MCF 10A (cell line): ENCODE measurements at regions of chr17 and their contacts with region 1.

Region 1: DNA sequence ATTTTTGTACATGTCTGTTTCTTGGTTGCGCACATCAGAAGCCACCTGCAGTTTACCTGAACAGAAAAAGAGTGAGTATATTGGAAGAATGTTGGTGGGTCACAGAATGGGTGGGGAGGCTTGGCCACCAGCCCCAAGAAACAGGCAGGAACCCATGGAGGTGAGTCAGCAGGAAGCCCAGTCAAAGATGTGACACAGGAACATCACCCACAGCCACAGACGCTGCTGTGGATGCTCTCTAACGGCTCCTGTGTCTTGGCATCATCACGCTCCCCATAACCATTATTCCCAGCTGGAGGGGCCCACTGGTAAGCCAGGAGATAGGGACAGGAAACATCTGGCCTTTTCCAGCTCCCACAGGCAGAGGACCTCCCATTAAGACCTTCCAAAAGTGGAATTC is 94.0 kb upstream of the WSB1 start:
- DNase-seq: no peak
- H3K4me3 Mint-ChIP-seq: no peak overlapping the region
- H3K27ac Mint-ChIP-seq: no peak overlapping the region
- H3K4me1 Mint-ChIP-seq: no peaks in the 10 kb centered on the region
- H3K27me3 Mint-ChIP-seq: no peaks in the 10 kb centered on the region
- CTCF ChIP-seq: no peak

Region 2: DNA sequence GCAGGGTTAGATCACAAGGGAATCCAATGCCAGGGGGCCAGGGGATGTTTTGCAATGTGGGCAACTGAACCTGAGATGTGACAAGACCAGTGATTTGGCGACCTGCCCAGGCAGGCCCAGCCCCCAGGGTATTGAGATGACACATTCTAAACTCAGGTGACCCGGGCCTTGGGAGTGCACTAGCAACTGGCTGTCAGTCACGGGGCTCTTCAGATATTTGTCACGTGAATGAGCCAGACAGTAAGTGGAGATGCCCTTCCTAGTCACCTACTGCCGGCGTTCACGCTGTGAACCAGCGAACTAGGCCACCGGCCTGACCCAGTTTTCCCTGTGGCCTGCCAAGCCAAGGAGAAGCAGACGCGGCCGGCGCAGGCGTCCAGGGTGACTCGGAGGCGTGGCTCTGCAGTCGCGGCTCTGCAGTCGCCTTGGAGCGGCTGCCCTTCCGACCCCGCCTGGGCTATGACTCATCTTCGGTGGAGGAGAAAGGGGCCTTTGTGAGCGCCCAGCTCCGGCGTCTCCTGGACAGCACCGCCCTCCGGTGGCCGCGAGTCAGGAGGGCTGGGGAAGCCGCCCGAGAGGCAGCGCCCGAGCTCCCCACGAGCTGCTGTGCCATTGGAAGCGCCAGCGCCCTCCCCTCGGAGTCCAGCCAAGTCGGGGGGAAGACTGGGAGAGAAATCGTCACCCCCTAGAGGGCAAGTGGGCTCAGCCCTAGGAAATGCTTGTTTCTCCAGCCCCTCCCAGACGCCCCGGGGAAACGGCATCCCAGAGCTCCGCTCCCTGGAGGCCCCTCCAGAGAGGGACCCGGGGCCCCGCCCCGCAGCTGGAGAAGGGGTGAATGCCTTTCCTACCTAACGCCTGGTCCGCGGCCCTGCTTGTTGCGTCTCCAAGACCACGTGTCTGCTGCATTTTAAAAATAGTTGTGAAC is 132.8 kb after region 1 on chr17:
- CTCF ChIA-PET with region 1: no interaction called
- POLR2A ChIA-PET with region 1: interaction called, 3 read pairs
- intact Hi-C with region 1: loop called (anchors 2 kb)
- DNase-seq: peak; percentile 98
- H3K4me3 Mint-ChIP-seq: peak overlapping the region; percentile 71
- H3K27ac Mint-ChIP-seq: peak overlapping the region; percentile 79
- H3K4me1 Mint-ChIP-seq: peaks cover 34% of the 10 kb centered on the region
- H3K27me3 Mint-ChIP-seq: no peaks in the 10 kb centered on the region
- CTCF ChIP-seq: peak; percentile 98